ENCODE measurements at regions of chr17 and their contacts with region 1.

Region 1: GRCh38 chr17:409848-410545 is 57.4 kb upstream of the RPH3AL start:
- DNase-seq: peak; percentile 77
- H3K4me3 ChIP-seq: peak overlapping the region; percentile 79
- CTCF ChIP-seq: peak; percentile 4

Region 2: GRCh38 chr17:444879-445454 is 35.0 kb after region 1 on chr17:
- CTCF ChIA-PET with region 1: interaction called, 19 read pairs
- POLR2A ChIA-PET with region 1: no interaction called
- DNase-seq: no peak
- H3K4me3 ChIP-seq: no peak overlapping the region
- CTCF ChIP-seq: no peak

Region 3: GRCh38 chr17:622356-622755 is 212.4 kb after region 1 on chr17:
- CTCF ChIA-PET with region 1: interaction called, 14 read pairs
- POLR2A ChIA-PET with region 1: no interaction called
- DNase-seq: no peak
- H3K4me3 ChIP-seq: no peak overlapping the region
- CTCF ChIP-seq: no peak

Region 4: GRCh38 chr17:700504-701094 is 290.6 kb after region 1 on chr17:
- CTCF ChIA-PET with region 1: interaction called, 533 read pairs
- POLR2A ChIA-PET with region 1: interaction called, 3 read pairs
- DNase-seq: no peak
- H3K4me3 ChIP-seq: no peak overlapping the region
- CTCF ChIP-seq: peak; percentile 27

Region 5: DNA sequence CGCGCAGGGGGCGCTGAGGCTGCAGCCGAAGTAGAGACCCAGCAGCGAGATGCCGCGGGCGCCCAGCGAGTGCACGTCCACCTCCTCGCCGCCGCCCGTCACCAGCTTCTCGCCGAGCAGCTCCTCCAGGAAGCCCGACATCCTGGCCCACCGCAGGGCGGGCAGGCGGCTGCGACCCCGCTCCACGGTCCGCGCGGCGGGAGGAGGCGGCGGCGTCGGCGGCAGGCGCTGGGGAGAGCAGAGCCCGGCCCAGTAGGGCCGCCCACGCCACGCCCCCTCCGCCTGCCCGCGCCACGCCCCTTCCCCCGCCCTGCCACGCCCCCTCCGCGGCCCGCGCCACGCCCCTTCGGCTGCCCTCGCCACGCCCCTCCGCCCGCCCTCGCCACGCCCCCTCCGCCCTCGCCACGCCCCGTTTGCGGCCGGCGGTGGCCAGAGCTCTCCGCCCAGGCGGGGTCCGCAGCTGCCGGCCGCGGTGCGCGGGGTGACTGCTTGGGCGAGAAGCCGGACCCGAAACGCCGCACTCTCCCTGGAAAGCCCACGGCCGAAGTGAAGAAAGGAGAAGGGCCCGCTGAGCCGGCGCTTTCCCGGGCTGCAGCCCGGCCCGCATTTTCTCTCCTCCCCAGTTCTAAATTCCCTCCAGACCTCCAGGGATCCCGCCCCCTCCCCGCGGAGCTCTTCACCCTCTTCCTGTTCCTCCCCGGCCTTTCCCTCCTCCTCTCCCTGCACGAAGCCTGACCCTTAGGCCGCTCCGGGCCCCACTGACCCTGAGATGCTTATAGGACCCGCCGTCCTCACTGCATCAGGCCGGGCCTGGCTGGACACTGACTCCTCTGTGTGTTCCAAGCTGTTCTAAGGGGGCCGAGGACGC is 569.8 kb after region 1 on chr17 and contains the start of gene NXN:
- CTCF ChIA-PET with region 1: interaction called, 12 read pairs
- POLR2A ChIA-PET with region 1: no interaction called
- DNase-seq: no peak
- H3K4me3 ChIP-seq: peak within 1 kb of the TSS; percentile 87
- CTCF ChIP-seq: peak; percentile 47